BJ (cell line): ENCODE measurements at regions of chr12 and their contacts with region 1.

Region 1: DNA sequence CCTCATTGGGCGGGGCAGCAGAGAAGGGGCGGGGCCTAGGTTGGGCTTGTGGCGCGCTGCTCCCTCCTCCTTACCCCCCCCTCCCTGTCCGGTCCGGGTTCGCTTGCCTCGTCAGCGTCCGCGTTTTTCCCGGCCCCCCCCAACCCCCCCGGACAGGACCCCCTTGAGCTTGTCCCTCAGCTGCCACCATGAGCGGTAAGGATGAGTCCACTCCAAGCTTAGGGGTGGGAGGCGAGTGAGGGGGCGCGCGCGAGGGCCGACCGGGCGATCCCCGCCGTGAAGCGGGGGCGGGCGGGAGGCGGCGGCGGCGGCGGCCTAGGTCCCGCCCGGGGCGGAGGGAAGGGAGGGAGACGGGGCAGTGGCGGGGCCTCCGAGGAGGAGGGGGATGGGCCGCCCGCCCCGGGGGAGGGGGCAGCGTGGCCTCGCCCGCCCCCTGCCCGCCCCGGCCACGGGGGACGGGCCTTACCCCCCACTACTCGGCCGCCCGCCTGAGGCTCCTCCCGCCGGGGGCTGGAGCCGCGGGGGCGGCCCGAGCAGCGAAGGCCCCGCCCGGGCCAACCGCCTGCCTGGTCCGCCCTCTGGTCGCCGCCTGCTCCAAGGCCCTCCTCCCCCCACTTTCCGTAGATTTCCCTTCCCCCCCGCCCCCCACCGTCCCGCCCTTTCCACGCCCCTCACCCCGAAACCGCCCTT is at the start of gene SP1:
- DNase-seq: no peak
- H3K4me3 ChIP-seq: peak within 1 kb of the TSS; percentile 59
- H3K27me3 ChIP-seq: no peaks in the 10 kb centered on the region
- CTCF ChIP-seq: no peak
- polyA plus RNA-seq, gene SP1: 44.4 and 58.2 TPM in 2 replicates

Region 2: GRCh38 chr12:53391729-53392128 is 11.5 kb after region 1 on chr12:
- CTCF ChIA-PET with region 1: no interaction called
- POLR2A ChIA-PET with region 1: no interaction called
- DNase-seq: no peak
- H3K4me3 ChIP-seq: no peak overlapping the region
- H3K27me3 ChIP-seq: no peaks in the 10 kb centered on the region
- CTCF ChIP-seq: no peak

Region 3: DNA sequence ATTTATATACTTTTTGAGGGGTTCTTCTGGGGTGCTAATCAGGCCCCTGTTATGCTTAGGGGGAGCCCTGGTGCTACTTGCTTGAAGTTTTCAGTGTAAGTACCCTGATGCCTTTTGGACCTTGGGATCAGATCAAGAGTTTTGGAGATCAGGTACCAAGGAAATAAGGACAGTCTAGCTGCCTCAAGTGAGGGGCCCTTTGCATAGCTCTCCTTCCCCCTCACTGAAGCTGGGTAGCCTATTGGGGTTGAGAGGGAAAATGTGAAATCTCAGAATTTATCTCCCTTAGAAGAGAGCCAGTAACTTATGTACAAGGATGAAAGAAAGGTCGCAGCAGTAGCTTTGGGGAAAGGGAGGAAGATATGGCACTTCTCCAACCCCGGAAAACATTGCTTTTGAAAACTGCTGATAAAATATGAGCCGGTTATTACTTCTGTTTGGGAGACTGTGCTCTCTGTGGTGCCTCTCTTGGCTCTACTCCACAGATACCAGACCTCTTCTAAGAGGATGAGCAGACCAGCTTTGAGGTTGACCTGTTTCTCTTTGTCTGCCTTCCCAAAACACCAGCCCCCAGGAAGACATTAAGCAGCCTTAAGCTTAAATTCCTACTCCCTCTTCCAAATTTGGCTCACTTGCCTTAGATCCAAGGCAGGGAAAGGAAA is 34.6 kb after region 1 on chr12:
- CTCF ChIA-PET with region 1: no interaction called
- POLR2A ChIA-PET with region 1: interaction called, 15 read pairs
- DNase-seq: no peak
- H3K4me3 ChIP-seq: no peak overlapping the region
- H3K27me3 ChIP-seq: no peaks in the 10 kb centered on the region
- CTCF ChIP-seq: no peak

Region 4: GRCh38 chr12:53518381-53518780 is 138.1 kb after region 1 on chr12:
- CTCF ChIA-PET with region 1: no interaction called
- POLR2A ChIA-PET with region 1: no interaction called
- DNase-seq: no peak
- H3K4me3 ChIP-seq: no peak overlapping the region
- H3K27me3 ChIP-seq: no peaks in the 10 kb centered on the region
- CTCF ChIP-seq: no peak